SK-N-SH (cell line): ENCODE measurements at regions of chr17 and their contacts with region 1.

Region 1: DNA sequence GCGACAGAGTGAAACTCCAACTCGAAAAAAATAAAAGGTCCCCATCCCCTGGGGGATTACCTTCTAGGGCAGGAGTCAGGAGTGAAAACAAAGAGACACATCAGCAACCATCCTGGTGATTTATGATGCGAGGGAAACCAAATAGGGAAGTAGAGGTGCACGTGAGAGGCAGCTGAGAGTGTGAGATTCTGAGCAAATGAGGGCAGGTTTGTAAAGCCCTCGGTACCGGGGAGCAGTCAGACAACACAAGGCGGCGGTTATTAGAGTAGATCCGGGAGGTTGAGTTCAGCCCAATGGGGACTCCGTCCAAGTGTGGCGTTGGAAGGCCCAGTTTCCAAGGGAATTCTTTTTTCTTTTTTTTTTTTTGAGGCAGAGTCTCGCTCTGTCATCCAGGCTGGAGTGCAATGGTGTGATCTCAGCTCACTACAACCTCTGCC is 7.4 kb upstream of the ARMC7 start:
- DNase-seq: no peak
- H3K4me3 ChIP-seq: no peak overlapping the region
- H3K27ac ChIP-seq: no peak overlapping the region
- H3K4me1 ChIP-seq: peaks cover 0 to 10% of the 10 kb centered on the region in 2 experiments; a peak in 1 of 4 replicates
- H3K27me3 ChIP-seq: no peaks in the 10 kb centered on the region
- CTCF ChIP-seq: no peak
- EP300 ChIP-seq: no peak
- RAD21 ChIP-seq: no peak

Region 2: DNA sequence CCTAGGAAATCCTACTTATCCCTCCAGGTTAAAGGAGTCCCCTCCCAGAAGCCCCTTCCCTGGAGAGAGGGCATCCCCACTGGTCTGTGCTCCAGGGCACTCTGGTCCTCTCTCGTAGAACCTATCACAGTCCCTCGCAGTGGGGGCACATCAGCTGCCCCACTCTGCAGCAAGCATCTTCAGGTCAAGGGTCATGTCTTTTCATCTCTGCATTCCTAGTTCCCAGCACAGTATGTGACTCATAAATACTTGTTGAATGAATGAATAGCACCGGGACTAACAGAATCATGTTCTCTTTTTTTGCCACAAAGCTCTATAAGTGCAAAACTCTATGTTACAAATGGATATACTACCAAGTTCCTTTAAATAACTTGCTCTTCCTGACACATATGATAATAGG is 1101.9 kb after region 1 on chr17:
- CTCF ChIA-PET with region 1: no interaction called
- POLR2A ChIA-PET with region 1: interaction called, 12 read pairs
- DNase-seq: no peak
- H3K4me3 ChIP-seq: peak overlapping the region in 1 of 2 experiments; percentile 4; a peak in 1 of 4 replicates
- H3K27ac ChIP-seq: peak overlapping the region in 1 of 2 experiments; percentile 64; a peak in 2 of 4 replicates
- H3K4me1 ChIP-seq: peaks cover 6 to 11% of the 10 kb centered on the region in 2 experiments; a peak in 3 of 4 replicates
- H3K27me3 ChIP-seq: no peaks in the 10 kb centered on the region
- CTCF ChIP-seq: no peak
- EP300 ChIP-seq: no peak
- RAD21 ChIP-seq: no peak